Activated naive CD4-positive, alpha-beta T cell treated with anti-CD3 and anti-CD28 coated beads for 36 hours (primary cell): ENCODE measurements at regions of chr1 and their contacts with region 1.

Region 1: GRCh38 chr1:205321164-205321958 is at the start of gene NUAK2:
- DNase-seq: peak; percentile 90
- H3K4me3 Mint-ChIP-seq: peak within 1 kb of the TSS; percentile 98
- H3K27ac Mint-ChIP-seq: peak within 1 kb of the TSS; percentile 93
- H3K4me1 Mint-ChIP-seq: peaks cover 50% of the 10 kb centered on the region
- H3K27me3 Mint-ChIP-seq: no peaks in the 10 kb centered on the region
- total RNA-seq, gene NUAK2: 11.2 to 12.2 TPM

Region 2: DNA sequence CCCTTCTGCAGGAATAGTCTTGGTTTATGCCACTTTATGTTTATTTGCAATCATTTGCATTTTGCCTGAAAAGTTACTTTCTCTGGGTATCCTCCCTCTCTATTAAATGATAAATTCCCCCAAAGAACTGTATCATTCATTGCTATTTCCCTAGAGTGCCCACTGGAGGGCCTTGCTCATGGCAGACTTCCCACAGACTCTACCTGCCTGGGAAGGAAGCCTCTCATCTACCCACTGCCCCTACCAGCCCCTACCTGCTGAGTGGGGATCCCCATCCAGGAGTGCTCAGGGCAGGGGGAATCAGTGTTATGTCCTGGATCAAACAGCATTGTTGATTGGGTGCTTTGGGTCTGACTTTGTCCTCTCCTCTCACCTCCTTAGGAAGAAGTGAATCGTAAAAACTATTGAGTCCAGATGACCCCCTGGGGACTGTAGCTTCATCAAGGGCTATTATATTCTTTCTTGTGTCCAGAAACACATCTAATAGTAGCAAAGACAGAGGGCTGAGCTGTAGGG is 629.0 kb before region 1 on chr1:
- CTCF ChIA-PET with region 1: no interaction called
- intact Hi-C with region 1: no loop called
- DNase-seq: no peak
- H3K4me3 Mint-ChIP-seq: no peak overlapping the region
- H3K27ac Mint-ChIP-seq: no peak overlapping the region
- H3K4me1 Mint-ChIP-seq: peaks cover 9% of the 10 kb centered on the region
- H3K27me3 Mint-ChIP-seq: peaks cover 2% of the 10 kb centered on the region

Region 3: GRCh38 chr1:205111354-205111753 is 210.0 kb before region 1 on chr1:
- CTCF ChIA-PET with region 1: no interaction called
- intact Hi-C with region 1: no loop called
- DNase-seq: no peak
- H3K4me3 Mint-ChIP-seq: no peak overlapping the region
- H3K27ac Mint-ChIP-seq: no peak overlapping the region
- H3K4me1 Mint-ChIP-seq: peaks cover 8% of the 10 kb centered on the region
- H3K27me3 Mint-ChIP-seq: no peaks in the 10 kb centered on the region

Region 4: DNA sequence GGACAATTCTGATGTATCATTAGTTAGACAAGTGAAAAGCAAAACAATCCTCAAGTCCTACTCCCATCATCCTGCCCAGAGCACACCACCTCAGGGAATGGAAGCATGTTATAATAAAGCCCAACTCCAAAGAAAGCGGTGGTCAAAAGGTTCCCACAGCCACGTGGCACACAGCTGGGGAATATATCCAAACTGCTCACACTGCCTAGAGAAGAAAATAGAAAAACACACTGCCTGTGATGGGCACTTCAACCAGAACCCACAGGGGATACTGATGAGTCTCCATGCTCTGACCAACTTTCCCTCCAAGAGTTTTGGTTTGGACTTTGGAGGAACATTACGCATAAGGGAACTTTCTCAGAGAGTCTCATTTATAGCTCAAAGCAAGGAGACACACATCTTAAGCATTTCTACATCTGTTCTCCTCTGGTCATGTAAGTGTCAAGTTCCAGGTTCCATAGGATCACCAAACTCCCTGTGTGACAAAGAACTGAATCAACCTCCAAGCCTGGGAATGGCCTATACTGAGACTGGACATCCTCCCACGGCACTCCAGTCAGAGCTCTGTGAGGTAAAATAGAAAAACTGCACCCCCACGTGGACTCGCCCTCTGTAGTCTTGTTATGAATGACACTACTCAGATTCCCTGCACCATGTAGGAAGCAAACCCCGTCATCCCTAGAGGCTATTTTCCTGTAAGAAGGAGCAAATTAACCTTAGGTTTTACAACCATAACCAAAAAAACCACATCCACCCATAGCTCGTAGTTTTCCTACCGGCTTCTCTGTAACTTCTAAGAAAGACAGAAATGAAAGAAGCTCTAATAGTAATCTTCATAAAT is 122.1 kb before region 1 on chr1:
- CTCF ChIA-PET with region 1: interaction called, 3 read pairs
- intact Hi-C with region 1: loop called (anchors 1 kb)
- DNase-seq: peak; percentile 74
- H3K4me3 Mint-ChIP-seq: peak overlapping the region; percentile 66
- H3K27ac Mint-ChIP-seq: peak overlapping the region; percentile 97
- H3K4me1 Mint-ChIP-seq: peaks cover 78% of the 10 kb centered on the region
- H3K27me3 Mint-ChIP-seq: no peaks in the 10 kb centered on the region

Region 5: GRCh38 chr1:205237526-205238484 is 83.6 kb before region 1 on chr1:
- CTCF ChIA-PET with region 1: interaction called, 48 read pairs
- intact Hi-C with region 1: loop called (anchors 2 kb)
- DNase-seq: peak; percentile 92
- H3K4me3 Mint-ChIP-seq: peak overlapping the region; percentile 44
- H3K27ac Mint-ChIP-seq: peak overlapping the region; percentile 98
- H3K4me1 Mint-ChIP-seq: peaks cover 77% of the 10 kb centered on the region
- H3K27me3 Mint-ChIP-seq: no peaks in the 10 kb centered on the region

Region 6: GRCh38 chr1:205273551-205273982 is 47.8 kb before region 1 on chr1:
- CTCF ChIA-PET with region 1: interaction called, 948 read pairs
- intact Hi-C with region 1: loop called (anchors 1 kb)
- DNase-seq: peak; percentile 94
- H3K4me3 Mint-ChIP-seq: no peak overlapping the region
- H3K27ac Mint-ChIP-seq: peak overlapping the region; percentile 27
- H3K4me1 Mint-ChIP-seq: peaks cover 51% of the 10 kb centered on the region
- H3K27me3 Mint-ChIP-seq: no peaks in the 10 kb centered on the region

Region 7: GRCh38 chr1:205294175-205294913 is 27.0 kb before region 1 on chr1:
- CTCF ChIA-PET with region 1: interaction called, 948 read pairs
- intact Hi-C with region 1: no loop called
- DNase-seq: no peak
- H3K4me3 Mint-ChIP-seq: no peak overlapping the region
- H3K27ac Mint-ChIP-seq: no peak overlapping the region
- H3K4me1 Mint-ChIP-seq: peaks cover 64% of the 10 kb centered on the region
- H3K27me3 Mint-ChIP-seq: no peaks in the 10 kb centered on the region

Region 8: DNA sequence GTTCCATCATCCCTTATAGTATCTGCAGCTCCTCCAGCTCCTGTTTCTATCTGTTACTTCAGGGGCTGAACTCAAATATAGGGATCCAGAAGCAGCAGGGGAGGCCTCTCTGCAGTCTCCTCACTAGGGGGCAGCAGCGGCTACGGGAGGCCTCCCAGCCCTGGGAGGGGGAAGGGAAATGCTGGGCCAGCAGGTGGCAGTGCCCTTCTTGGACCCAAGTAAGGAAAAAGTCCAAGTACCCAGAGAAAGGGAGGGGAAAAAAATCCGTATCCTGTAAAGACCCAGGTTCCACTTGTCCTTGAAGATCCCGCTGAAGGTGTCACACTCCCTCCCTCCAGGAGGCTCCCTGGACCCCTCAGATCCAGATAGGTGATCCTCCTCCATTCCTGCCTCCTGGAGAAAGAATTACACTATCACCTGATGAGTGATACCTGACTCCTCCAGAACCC is 14.3 kb after region 1 on chr1:
- CTCF ChIA-PET with region 1: interaction called, 70 read pairs
- intact Hi-C with region 1: no loop called
- DNase-seq: peak; percentile 92
- H3K4me3 Mint-ChIP-seq: no peak overlapping the region
- H3K27ac Mint-ChIP-seq: no peak overlapping the region
- H3K4me1 Mint-ChIP-seq: no peaks in the 10 kb centered on the region
- H3K27me3 Mint-ChIP-seq: no peaks in the 10 kb centered on the region